Gastrocnemius medialis (tissue), 4 donors: ENCODE measurements at regions of chr14 and their contacts with region 1.

Region 1: GRCh38 chr14:42163136-42163535 is 556.5 kb downstream of the LRFN5 start:
- DNase-seq: no peak
- ATAC-seq: no peak
- H3K4me3 ChIP-seq: no peak overlapping the region
- H3K27ac ChIP-seq: no peak overlapping the region
- H3K4me1 ChIP-seq: no peaks in the 10 kb centered on the region
- H3K27me3 ChIP-seq: no peaks in the 10 kb centered on the region
- CTCF ChIP-seq: no peak
- POLR2A ChIP-seq: no peak

Region 2: DNA sequence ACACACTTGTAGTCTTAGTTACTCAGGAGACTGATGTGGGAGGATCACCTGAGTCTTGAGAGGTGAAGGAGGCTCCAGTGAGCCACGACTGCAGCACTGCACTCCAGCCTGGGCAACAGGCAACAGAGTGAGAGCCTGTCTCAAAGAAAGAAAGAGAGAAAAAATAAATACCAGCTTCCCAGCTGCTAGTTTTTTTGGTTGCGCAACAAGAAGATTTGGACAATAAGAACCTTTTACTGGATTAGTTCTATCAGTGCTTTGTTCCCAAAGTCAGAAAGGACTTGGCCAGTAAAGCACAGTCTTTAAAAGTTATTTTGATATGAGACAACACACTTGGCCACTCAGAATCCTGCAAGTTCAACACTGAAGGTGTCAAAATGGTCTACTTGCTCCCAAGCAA is 1324.5 kb before region 1 on chr14:
- in situ Hi-C with region 1: no loop called
- intact Hi-C with region 1: loop called (anchors 10 kb)
- DNase-seq: no peak
- ATAC-seq: no peak
- H3K4me3 ChIP-seq: no peak overlapping the region
- H3K27ac ChIP-seq: no peak overlapping the region
- H3K4me1 ChIP-seq: no peaks in the 10 kb centered on the region
- H3K27me3 ChIP-seq: no peaks in the 10 kb centered on the region
- CTCF ChIP-seq: no peak
- POLR2A ChIP-seq: no peak

Region 3: DNA sequence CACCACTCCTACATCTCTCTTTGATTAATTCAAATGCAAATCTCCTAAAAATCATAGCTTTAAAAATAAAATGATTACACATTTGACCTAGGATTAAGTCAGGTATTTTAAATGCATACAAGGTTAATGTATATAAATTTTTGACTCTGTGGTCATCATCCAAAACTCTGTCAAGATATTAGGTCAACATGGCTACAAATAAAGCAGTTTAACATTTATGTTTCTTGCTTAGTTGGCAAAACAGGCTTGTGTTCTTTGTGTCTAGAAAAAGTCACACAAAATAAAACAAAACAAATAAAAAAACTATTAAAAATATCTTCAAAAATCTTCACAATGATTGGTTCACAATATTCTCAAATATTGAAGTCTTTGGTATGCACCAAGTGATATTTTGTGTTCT is 83.2 kb before region 1 on chr14:
- in situ Hi-C with region 1: no loop called
- intact Hi-C with region 1: no loop called
- DNase-seq: no peak
- ATAC-seq: no peak
- H3K4me3 ChIP-seq: no peak overlapping the region
- H3K27ac ChIP-seq: no peak overlapping the region
- H3K4me1 ChIP-seq: no peaks in the 10 kb centered on the region
- H3K27me3 ChIP-seq: no peaks in the 10 kb centered on the region
- CTCF ChIP-seq: no peak
- POLR2A ChIP-seq: no peak